ENCODE measurements at regions of chr11 and their contacts with region 1.

Region 1: DNA sequence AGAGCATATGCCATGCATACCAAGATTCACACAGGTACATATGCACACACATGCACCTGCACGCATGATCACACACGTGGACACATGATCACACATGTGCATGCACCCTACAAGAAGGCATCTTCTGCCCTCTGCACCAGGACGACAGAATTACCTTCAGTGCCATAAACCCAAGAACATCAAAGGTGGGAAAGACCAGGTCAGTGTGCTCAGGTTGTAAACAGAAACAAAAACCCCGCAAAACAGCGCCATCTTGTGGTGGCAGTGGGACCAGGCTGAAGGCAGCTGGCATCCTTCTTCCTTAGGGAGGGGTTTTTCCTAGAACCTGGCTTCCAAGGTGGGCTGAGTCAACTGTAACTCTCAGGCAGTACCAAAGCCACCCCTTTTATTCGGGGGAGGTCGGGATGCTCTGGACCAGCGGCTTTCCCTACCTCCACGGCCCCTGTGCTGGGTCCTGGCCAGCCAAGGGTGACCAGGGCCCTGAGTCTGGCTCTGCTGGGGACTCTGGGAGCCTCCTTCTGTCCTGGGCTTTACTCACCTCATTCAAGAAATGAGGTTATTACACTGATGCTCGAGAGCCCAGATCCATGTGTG is 69.4 kb upstream of the FGF3 start:
- DNase-seq: no peak
- H3K4me3 ChIP-seq: no peak overlapping the region
- H3K27ac ChIP-seq: no peak overlapping the region
- H3K4me1 ChIP-seq: peaks cover 0 to 25% (median 0%) of the 10 kb centered on the region in 3 donors
- H3K27me3 ChIP-seq: peaks cover 0 to 65% (median 0%) of the 10 kb centered on the region in 4 donors
- CTCF ChIP-seq: peak; percentile 50 to 87 (median 72)
- POLR2A ChIP-seq: no peak

Region 2: GRCh38 chr11:69683764-69684333 is 204.7 kb before region 1 on chr11:
- intact Hi-C with region 1: loop called (anchors 5 kb)
- DNase-seq: no peak
- H3K4me3 ChIP-seq: no peak overlapping the region
- H3K27ac ChIP-seq: no peak overlapping the region
- H3K4me1 ChIP-seq: peaks cover 0 to 8% (median 0%) of the 10 kb centered on the region in 3 donors
- H3K27me3 ChIP-seq: peaks cover 0 to 22% (median 0%) of the 10 kb centered on the region in 4 donors
- CTCF ChIP-seq: peak in 5 of 6 experiments; percentile 43 to 71 (median 55)
- POLR2A ChIP-seq: no peak

Region 3: DNA sequence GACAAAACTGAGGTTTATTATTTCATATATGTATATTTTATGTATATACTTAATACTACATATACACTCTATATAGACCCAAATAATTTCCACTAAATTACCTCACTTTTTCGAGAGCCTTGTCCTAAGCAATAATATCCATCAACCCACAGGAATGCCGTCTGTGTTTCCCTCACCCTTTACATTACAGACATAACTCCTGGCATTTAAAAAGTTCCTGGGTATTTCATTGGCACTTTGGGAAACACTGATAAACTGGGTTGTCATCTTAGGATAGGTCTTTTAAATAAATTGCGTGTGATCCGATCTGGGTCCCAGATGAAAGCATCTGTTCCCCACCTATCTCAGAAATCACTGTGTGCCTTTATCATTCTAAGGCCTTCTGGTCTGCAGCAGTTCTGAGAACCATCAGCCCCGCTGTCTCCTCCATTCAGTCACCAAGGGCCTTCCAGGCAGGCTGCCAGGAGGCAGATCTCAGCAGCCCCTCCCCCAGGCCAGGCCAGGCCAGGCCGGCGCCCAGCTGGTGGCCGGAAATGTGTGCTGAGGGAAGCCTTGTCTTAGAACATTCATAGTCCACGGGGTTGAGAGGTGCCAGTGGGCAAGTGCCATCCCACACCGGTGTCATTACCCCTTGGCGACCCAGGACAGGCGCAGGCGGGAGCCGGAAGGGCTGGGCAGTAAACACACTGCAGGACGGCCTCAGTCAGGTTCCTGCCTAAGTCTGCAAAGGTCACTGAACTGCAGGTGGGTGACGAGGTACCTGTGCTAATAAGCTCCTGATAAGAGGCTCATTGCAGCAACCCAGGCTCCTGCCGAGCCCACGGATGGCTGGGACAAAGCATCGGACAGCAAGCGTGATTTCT is 188.1 kb before region 1 on chr11:
- intact Hi-C with region 1: loop called (anchors 10 kb)
- DNase-seq: no peak
- H3K4me3 ChIP-seq: no peak overlapping the region
- H3K27ac ChIP-seq: no peak overlapping the region
- H3K4me1 ChIP-seq: peaks cover 9 to 39% (median 16%) of the 10 kb centered on the region in 3 donors
- H3K27me3 ChIP-seq: peaks cover 22 to 96% (median 26%) of the 10 kb centered on the region in 4 donors
- CTCF ChIP-seq: no peak
- POLR2A ChIP-seq: no peak